ENCODE measurements at regions of chr22 and their contacts with region 1.

Region 1: GRCh38 chr22:16783930-16784354 is 41.3 kb downstream of the XKR3 start:
- DNase-seq: no peak
- H3K4me3 Mint-ChIP-seq: no peak overlapping the region
- H3K27ac Mint-ChIP-seq: no peak overlapping the region
- H3K4me1 Mint-ChIP-seq: no peaks in the 10 kb centered on the region
- H3K27me3 Mint-ChIP-seq: peaks cover 11% of the 10 kb centered on the region

Region 2: DNA sequence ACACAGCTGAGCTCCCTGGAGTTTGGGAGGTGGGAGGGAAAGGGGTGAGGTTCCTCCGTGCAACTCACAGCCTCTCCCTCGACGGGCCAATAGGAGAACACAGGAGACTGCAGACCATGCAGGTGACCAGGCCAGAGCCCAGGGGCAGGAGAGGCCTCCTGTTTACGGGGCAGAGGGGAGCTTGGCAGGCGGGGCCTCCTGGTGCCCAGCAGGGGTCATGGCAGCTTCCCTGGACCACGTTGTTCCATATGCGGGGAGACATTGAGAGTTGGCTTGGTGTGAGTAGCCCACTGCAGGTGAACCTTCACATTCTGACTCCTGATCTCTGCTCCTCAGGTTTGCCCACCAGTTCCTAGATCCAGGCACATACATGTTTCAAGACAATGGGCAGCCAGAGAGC is 60.6 kb after region 1 on chr22:
- CTCF ChIA-PET with region 1: interaction called, 3 read pairs
- intact Hi-C with region 1: loop called (anchors 10 kb)
- DNase-seq: no peak
- H3K4me3 Mint-ChIP-seq: no peak overlapping the region
- H3K27ac Mint-ChIP-seq: no peak overlapping the region
- H3K4me1 Mint-ChIP-seq: peaks cover 2% of the 10 kb centered on the region
- H3K27me3 Mint-ChIP-seq: peaks cover 5% of the 10 kb centered on the region

Region 3: DNA sequence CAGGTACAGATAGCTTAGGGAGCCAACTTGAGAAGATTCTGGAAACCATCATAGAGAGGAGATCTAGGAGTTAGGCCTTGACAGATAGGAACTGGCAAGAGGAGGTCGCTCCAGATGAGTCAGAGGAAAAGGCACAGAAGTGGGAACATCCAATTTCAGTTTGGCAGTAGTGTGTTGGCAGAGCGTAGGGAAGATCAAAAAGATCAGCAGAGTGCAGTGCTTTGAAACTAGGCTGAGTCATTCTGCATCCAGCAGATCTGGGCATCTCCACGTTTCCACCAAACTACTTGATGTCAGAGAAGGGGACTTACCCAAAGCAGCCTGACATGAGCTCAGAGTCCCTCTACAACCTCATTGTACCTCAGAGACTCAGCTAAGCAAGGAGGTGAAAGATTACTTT is 165.6 kb after region 1 on chr22:
- CTCF ChIA-PET with region 1: no interaction called
- intact Hi-C with region 1: no loop called
- DNase-seq: peak; percentile 71
- H3K4me3 Mint-ChIP-seq: no peak overlapping the region
- H3K27ac Mint-ChIP-seq: no peak overlapping the region
- H3K4me1 Mint-ChIP-seq: peaks cover 14% of the 10 kb centered on the region
- H3K27me3 Mint-ChIP-seq: peaks cover 2% of the 10 kb centered on the region

Measured in activated naive CD4-positive, alpha-beta T cell treated with anti-CD3 and anti-CD28 coated beads for 36 hours (primary cell).